PC-3 (cell line): ENCODE measurements at regions of chr20 and their contacts with region 1.

Region 1: GRCh38 chr20:35303735-35304491 is 11.7 kb upstream of the FAM83C start:
- DNase-seq: peak; percentile 98
- ATAC-seq: peak; percentile 27
- H3K4me3 ChIP-seq: no peak overlapping the region
- H3K27ac ChIP-seq: peak overlapping the region; percentile 98
- H3K4me1 ChIP-seq: peaks cover 76% of the 10 kb centered on the region
- H3K27me3 ChIP-seq: no peaks in the 10 kb centered on the region
- CTCF ChIP-seq: peak; percentile 97

Region 2: GRCh38 chr20:34922654-34923424 is 381.1 kb before region 1 on chr20:
- CTCF ChIA-PET with region 1: no interaction called
- POLR2A ChIA-PET with region 1: no interaction called
- intact Hi-C with region 1: no loop called
- DNase-seq: peak; percentile 95
- ATAC-seq: peak; percentile 87
- H3K4me3 ChIP-seq: 0 out of 2 replicates have a peak overlapping the region, but pooled peaks have one; percentile 0
- H3K27ac ChIP-seq: peak overlapping the region; percentile 50
- H3K4me1 ChIP-seq: peaks cover 45% of the 10 kb centered on the region
- H3K27me3 ChIP-seq: no peaks in the 10 kb centered on the region
- CTCF ChIP-seq: no peak

Region 3: GRCh38 chr20:35151736-35152135 is 152.2 kb before region 1 on chr20:
- CTCF ChIA-PET with region 1: no interaction called
- POLR2A ChIA-PET with region 1: no interaction called
- intact Hi-C with region 1: no loop called
- DNase-seq: no peak
- ATAC-seq: no peak
- H3K4me3 ChIP-seq: no peak overlapping the region
- H3K27ac ChIP-seq: no peak overlapping the region
- H3K4me1 ChIP-seq: peaks cover 6% of the 10 kb centered on the region
- H3K27me3 ChIP-seq: no peaks in the 10 kb centered on the region
- CTCF ChIP-seq: no peak

Region 4: DNA sequence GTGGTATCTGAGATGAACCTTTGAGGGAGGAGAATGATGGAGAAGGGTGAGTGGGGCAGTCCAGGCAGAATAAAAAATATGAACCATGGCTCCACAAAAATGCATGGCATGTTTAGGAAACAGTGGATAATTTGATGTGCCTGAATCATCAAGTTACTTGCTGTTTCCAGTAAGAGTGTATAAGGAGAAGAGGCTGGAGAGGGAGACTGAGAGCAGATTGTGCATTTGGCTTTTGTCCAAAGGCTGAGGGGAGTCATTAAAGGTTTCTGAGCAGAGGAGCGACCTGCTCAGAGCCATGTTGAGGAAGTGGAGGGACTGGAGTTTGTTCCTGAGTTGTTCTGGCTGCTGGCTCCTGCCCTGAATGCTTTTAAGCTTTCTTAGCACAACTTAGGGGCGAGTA is 71.3 kb before region 1 on chr20:
- CTCF ChIA-PET with region 1: no interaction called
- POLR2A ChIA-PET with region 1: no interaction called
- intact Hi-C with region 1: no loop called
- DNase-seq: no peak
- ATAC-seq: no peak
- H3K4me3 ChIP-seq: no peak overlapping the region
- H3K27ac ChIP-seq: no peak overlapping the region
- H3K4me1 ChIP-seq: no peaks in the 10 kb centered on the region
- H3K27me3 ChIP-seq: peaks cover 3% of the 10 kb centered on the region; the same call in 1 of the 2 replicates
- CTCF ChIP-seq: no peak

Region 5: GRCh38 chr20:35284267-35284991 is 19.5 kb before region 1 on chr20 and contains the start of gene EIF6:
- CTCF ChIA-PET with region 1: no interaction called
- POLR2A ChIA-PET with region 1: interaction called, 12 read pairs
- intact Hi-C with region 1: loop called (anchors 2 kb)
- DNase-seq: peak; percentile 89
- ATAC-seq: peak; percentile 90
- H3K4me3 ChIP-seq: peak within 1 kb of the TSS; percentile 98
- H3K27ac ChIP-seq: peak within 1 kb of the TSS; percentile 72
- H3K4me1 ChIP-seq: peaks cover 16% of the 10 kb centered on the region
- H3K27me3 ChIP-seq: no peaks in the 10 kb centered on the region
- CTCF ChIP-seq: no peak
- total RNA-seq, gene EIF6: 292 and 294 TPM in 2 replicates

Region 6: GRCh38 chr20:35318502-35319157 is 14.7 kb after region 1 on chr20:
- CTCF ChIA-PET with region 1: interaction called, 19 read pairs
- POLR2A ChIA-PET with region 1: interaction called, 8 read pairs
- intact Hi-C with region 1: loop called (anchors 1 kb)
- DNase-seq: peak; percentile 99
- ATAC-seq: peak; percentile 66
- H3K4me3 ChIP-seq: peak overlapping the region; percentile 20; the same call in 1 of the 2 replicates
- H3K27ac ChIP-seq: peak overlapping the region; percentile 95
- H3K4me1 ChIP-seq: peaks cover 63% of the 10 kb centered on the region
- H3K27me3 ChIP-seq: no peaks in the 10 kb centered on the region
- CTCF ChIP-seq: no peak

Region 7: DNA sequence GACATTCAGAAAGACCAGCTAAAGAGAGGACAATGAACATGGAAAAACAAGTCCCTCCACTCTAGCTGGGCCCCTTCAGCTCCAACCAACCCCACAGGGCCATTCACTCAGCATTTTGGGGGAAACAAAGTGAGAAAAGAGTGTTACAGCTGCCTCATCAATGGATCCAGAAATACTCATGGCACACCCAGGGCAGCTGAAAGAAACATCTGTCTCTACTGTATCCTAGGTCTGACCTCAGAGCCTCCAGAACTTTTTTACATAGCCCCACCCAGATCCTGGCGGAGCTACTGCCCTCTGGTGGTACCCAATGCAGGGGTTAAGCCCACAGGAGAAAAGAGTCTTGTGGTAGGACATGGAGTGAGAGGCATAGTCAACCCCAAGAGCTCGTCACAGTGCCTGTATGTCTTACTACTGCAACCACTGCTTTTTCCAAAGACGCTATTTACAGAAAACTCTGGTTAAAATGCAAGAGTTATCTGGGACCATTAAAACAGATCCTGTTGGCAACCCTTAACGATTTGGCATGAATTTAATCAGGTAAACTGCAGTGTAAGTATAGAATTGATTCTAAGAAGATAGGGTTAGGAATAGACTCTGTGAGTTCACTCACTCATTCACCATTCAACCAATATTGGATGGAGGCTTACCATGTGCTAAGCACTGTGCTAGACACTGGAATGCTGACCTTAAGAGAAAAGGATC is 25.7 kb after region 1 on chr20:
- CTCF ChIA-PET with region 1: interaction called, 4 read pairs
- POLR2A ChIA-PET with region 1: no interaction called
- intact Hi-C with region 1: loop called (anchors 1 kb)
- DNase-seq: peak; percentile 83
- ATAC-seq: peak; percentile 85
- H3K4me3 ChIP-seq: no peak overlapping the region
- H3K27ac ChIP-seq: peak overlapping the region; percentile 19
- H3K4me1 ChIP-seq: peaks cover 26% of the 10 kb centered on the region
- H3K27me3 ChIP-seq: no peaks in the 10 kb centered on the region
- CTCF ChIP-seq: peak; percentile 91

Region 8: DNA sequence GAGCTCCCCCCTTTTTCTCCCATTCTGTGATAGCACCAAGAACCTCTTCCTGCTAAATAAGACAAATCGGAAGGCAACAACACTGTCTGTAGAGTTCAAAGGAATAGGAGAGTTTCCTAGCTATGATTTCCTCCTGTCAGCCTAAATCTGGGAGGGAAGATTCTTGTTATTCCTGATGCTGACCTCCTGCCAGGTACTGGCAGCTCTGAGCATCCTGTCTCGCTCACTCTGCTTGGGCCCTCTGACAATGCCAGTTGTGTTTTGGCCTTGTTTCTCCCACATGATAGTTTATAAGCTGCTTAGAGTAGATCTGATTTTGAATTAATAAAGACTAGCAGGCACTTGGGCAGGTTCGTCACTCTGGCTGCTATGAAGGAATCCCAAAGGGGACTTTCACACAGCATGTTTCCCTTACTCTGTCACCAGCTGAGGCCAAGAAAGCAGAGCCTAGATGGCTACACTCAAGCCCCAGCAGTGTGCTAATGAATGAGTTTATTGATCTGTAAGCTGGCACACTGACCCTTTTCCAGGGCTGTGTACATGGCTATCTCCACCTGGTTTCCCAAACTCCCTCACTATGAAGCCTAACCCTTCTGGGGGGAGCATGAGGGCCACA is 55.5 kb after region 1 on chr20:
- CTCF ChIA-PET with region 1: interaction called, 19 read pairs
- POLR2A ChIA-PET with region 1: interaction called, 3 read pairs
- intact Hi-C with region 1: loop called (anchors 1 kb)
- DNase-seq: peak; percentile 10
- ATAC-seq: peak; percentile 21
- H3K4me3 ChIP-seq: no peak overlapping the region
- H3K27ac ChIP-seq: no peak overlapping the region
- H3K4me1 ChIP-seq: peaks cover 33% of the 10 kb centered on the region
- H3K27me3 ChIP-seq: no peaks in the 10 kb centered on the region
- CTCF ChIP-seq: no peak

Region 9: GRCh38 chr20:35447082-35447789 is 143.3 kb after region 1 on chr20:
- CTCF ChIA-PET with region 1: interaction called, 4 read pairs
- POLR2A ChIA-PET with region 1: no interaction called
- intact Hi-C with region 1: loop called (anchors 2 kb)
- DNase-seq: peak; percentile 96
- ATAC-seq: peak; percentile 94
- H3K4me3 ChIP-seq: peak overlapping the region; percentile 62; the same call in 1 of the 2 replicates
- H3K27ac ChIP-seq: no peak overlapping the region
- H3K4me1 ChIP-seq: no peaks in the 10 kb centered on the region; the same call in 1 of the 2 replicates
- H3K27me3 ChIP-seq: no peaks in the 10 kb centered on the region
- CTCF ChIP-seq: peak; percentile 88